ENCODE measurements at regions of chr13 and their contacts with region 1.

Region 1: GRCh38 chr13:37058910-37059847 is at the start of gene SUPT20H:
- DNase-seq: peak; percentile 98
- H3K4me3 ChIP-seq: peak within 1 kb of the TSS; percentile 79
- H3K27ac ChIP-seq: peak within 1 kb of the TSS; percentile 90
- H3K4me1 ChIP-seq: no peaks in the 10 kb centered on the region
- H3K27me3 ChIP-seq: no peaks in the 10 kb centered on the region
- CTCF ChIP-seq: no peak
- total RNA-seq, gene SUPT20H: 82.6 and 94.4 TPM in 2 replicates

Region 2: GRCh38 chr13:36420437-36420891 is 638.7 kb before region 1 on chr13:
- CTCF ChIA-PET with region 1: no interaction called
- POLR2A ChIA-PET with region 1: no interaction called
- intact Hi-C with region 1: loop called (anchors 10 kb)
- DNase-seq: peak; percentile 92
- H3K4me3 ChIP-seq: no peak overlapping the region
- H3K27ac ChIP-seq: peak overlapping the region; percentile 31
- H3K4me1 ChIP-seq: peaks cover 39% of the 10 kb centered on the region
- H3K27me3 ChIP-seq: no peaks in the 10 kb centered on the region
- CTCF ChIP-seq: peak; percentile 92

Region 3: GRCh38 chr13:37187105-37187504 is 127.9 kb after region 1 on chr13:
- CTCF ChIA-PET with region 1: no interaction called
- POLR2A ChIA-PET with region 1: interaction called, 13 read pairs
- intact Hi-C with region 1: no loop called
- DNase-seq: peak; percentile 94
- H3K4me3 ChIP-seq: no peak overlapping the region
- H3K27ac ChIP-seq: no peak overlapping the region
- H3K4me1 ChIP-seq: peaks cover 14% of the 10 kb centered on the region
- H3K27me3 ChIP-seq: no peaks in the 10 kb centered on the region
- CTCF ChIP-seq: no peak

Measured in A673 (cell line).